GM13977 (cell line): ENCODE measurements at regions of chr11 and their contacts with region 1.

Region 1: GRCh38 chr11:38867338-38867737 is 2269.3 kb upstream of the RAG2 start:
- DNase-seq: no peak
- CTCF ChIP-seq: no peak

Region 2: DNA sequence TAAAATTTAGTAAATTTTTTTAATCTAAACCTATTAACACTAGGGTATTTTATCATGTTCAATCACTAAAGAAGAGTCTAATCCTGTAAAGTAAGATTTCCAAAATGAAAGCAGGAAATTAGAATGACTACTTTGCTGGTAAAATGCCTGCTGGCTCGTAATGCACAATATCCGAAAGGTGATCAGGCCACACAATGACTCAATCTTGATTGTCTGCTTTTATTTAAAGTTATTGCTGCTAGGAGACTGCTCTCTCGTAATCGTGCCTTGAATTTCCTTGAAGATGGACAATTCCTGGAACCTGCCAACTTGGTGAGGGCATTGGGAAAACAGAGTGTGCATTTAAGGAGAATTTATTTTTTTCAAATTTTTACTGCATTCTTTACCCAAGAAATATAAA is 482.8 kb before region 1 on chr11:
- in situ Hi-C with region 1: no loop called
- DNase-seq: no peak
- CTCF ChIP-seq: no peak

Region 3: GRCh38 chr11:38476808-38477575 is 390.3 kb before region 1 on chr11:
- in situ Hi-C with region 1: no loop called
- DNase-seq: no peak
- CTCF ChIP-seq: no peak

Region 4: GRCh38 chr11:38498721-38499120 is 368.6 kb before region 1 on chr11:
- in situ Hi-C with region 1: no loop called
- DNase-seq: no peak
- CTCF ChIP-seq: no peak

Region 5: DNA sequence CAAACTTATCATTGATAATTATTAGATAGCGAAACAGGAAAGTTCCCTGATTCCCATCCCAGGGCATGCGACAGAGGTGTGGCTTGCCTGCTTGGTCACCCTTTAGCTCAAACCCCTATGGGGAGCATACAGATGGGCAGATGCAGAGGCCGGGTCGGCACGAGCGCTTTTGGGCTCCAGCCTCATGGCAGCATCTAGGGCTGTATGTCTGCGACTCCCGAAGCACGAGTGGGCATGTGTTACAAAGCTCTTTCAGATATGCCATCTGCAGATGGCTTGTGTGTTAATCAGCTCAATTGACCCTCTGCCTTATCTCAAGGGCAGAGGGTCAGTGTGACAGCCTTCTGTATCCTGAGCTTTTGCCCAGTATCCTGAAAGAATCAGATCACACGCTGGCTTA is 200.0 kb before region 1 on chr11:
- in situ Hi-C with region 1: no loop called
- DNase-seq: no peak
- CTCF ChIP-seq: no peak

Region 6: DNA sequence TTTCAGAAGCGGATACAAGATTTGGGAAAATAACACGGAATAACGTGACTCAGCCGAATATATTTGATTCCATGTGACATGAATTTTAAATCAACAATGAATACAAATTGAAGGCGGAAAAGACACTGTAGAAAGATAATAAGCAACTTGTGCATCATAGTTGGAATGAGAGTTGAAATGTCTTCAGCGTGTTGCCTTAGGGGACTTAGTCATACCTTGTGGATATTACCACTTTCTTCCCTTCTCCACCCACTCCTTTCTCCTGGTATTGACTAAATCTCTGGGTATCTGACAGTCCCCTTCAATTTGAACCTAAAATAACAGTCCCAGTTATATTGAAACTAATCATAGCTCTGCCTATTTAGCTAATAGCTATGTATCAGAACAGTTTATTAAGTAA is 103.8 kb after region 1 on chr11:
- in situ Hi-C with region 1: loop called (anchors 25 kb)
- DNase-seq: no peak
- CTCF ChIP-seq: no peak